Brain microvascular endothelial cell (primary cell): ENCODE measurements at regions of chr5 and their contacts with region 1.

Region 1: DNA sequence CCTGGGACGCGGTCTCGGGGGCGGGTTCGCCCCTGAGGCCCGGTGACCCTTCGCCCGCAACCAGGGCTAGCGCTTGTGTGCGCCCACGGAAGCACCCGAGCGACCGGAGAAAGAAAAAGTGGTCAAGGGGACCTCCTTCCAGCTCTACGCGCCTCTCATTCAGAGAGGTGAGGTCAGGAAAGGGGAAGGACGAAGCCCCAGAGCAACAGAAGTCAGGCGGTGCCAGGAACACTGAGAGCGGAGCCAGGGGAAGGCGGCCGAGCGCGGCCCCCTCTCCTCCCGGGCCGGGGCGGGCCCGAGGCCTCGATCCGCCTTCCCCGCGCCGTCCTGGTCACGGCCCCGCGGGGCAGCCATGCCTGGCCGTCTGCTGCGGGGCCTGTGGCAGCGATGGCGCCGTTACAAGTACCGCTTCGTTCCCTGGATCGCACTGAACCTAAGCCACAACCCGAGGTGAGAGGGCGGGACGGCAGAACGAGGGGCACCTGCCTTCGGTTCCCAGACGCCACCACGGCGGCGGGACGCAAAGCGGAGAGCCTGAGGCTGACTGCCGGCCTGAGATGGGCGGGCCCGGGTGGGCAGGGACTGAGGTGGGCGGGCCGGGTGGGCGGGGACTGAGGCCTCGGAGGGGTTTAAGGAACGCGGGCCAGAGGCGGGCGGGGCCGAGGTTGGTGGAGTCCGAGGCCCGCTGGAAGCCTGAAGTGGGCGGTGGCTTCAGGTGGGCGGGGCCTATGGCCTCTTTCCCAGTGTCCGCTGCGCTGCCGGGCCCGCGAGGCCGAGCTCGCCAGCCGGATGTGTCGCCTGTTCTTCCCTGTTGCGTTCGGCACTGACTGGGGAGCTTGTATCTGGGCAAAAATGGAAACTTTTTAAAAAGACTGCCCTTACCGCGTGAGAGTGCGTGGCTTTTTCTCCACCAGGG is at the start of gene SETD9:
- DNase-seq: peak; percentile 96
- H3K4me3 ChIP-seq: peak within 1 kb of the TSS; percentile 74
- H3K27ac ChIP-seq: peak within 1 kb of the TSS; percentile 96
- H3K27me3 ChIP-seq: no peaks in the 10 kb centered on the region
- CTCF ChIP-seq: no peak

Region 2: DNA sequence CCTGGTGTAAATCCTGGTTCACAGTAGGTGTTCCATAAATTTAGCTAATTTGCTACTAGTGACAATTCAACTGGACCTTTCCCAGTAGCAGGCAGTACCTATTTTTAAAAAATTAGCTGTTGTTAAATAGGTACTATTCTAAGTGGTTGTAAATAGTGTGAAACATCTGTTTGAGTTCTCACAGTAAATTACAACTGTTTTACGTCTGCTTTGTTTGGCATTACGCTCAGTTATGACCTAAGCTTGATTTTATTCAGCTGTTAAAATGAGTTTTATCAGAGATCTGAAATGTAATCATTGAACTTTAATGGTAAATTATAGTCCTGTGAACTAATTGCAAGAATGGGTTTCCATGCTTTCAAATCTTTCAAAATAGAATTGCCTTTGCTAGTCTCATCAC is 358.3 kb after region 1 on chr5:
- in situ Hi-C with region 1: loop called (anchors 25 kb)
- DNase-seq: no peak
- H3K4me3 ChIP-seq: no peak overlapping the region
- H3K27ac ChIP-seq: no peak overlapping the region
- H3K27me3 ChIP-seq: no peaks in the 10 kb centered on the region
- CTCF ChIP-seq: no peak